GM10248 (cell line): ENCODE measurements at regions of chr12 and their contacts with region 1.

Region 1: DNA sequence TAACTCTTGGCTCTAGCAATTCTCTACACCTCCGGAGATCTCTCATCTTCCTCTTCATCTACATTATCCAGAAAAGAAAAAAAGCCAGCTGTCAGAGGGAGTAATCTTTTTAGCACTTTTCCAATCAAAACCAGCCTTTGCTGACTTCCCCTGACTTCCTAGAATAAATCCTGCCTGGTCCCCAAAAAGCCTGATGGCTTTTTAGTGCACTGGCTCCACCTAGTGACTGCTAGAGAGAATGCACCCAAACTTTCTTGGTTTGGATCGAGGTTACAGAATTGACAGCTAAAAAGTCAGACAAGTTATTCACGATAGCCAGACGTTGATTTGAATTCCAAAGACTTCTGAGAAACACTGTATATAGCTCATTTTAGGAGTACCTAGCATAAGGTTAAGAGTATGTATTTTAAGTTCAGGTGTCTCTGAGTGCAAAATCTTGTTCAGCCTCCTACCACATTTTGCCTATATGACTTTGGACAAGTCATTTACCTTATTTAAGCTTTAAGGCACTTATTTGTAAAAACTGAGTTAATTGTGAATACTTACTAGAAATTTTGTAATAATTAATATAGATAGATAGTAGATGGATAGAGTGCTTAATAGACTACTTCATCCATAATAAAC is 185.7 kb upstream of the GRIN2B start:
- DNase-seq: peak; percentile 65
- CTCF ChIP-seq: peak; percentile 91

Region 2: DNA sequence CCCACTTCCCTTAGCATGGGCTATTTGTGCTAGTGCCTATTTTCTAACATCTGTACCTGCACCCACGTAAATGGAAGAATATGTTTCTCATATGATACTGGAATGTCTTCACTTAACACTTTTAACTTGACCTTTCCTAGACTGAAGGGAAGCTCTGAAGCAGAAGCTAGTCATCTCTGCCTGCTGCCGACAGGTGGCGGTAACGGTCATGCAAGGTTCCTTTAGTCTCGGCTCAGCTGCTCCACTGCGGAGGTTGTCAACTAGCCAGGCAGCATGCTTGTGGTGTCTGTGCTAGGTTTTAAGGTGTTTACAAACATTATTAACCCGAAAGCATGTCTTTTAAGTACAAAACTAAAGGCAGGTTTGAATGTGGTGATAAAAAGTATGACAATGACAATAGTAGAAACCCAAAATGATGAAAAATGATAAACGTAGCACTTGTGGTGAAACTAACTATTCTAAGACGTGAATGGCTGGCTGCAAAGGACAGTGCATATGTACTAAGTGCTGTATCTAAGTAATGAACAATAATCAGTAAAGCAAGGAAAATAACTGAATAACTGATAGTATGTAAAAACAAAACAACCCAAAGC is 302.9 kb before region 1 on chr12:
- CTCF ChIA-PET with region 1: interaction called, 22 read pairs
- POLR2A ChIA-PET with region 1: no interaction called
- DNase-seq: peak; percentile 64
- CTCF ChIP-seq: peak; percentile 94

Region 3: DNA sequence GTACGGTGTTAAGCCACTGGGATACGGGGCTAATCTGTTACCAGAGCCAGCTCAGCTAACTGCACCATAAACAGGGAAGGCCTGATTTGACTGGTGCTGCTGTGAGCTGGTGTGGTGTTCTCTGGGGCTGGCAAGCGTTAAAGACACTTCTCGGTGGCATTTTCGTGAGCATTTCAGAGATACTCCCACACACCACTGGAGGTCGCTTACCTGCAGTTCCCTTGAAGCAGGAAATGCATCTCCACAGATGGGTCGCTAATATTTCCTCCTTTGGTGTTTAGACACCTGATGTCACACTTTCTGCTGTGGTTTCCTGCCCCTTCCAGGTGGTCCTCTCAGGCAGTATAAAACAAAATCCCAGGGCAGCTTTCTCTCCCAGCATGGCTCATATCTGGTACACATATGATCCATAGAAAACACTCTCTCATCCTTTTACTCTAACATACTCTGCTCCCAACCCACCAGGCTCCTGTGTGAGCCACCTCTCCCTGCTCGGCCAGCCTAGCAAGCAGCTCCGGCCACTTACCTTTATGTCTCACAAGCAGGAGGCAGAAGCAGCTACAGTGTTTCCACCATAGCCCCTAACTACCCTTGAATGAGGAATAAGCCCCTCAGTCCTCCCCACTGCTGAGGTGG is 55.8 kb before region 1 on chr12:
- CTCF ChIA-PET with region 1: interaction called, 63 read pairs
- POLR2A ChIA-PET with region 1: no interaction called
- DNase-seq: peak; percentile 64
- CTCF ChIP-seq: peak; percentile 57

Region 4: GRCh38 chr12:14148489-14149270 is 18.4 kb before region 1 on chr12:
- CTCF ChIA-PET with region 1: interaction called, 28 read pairs
- POLR2A ChIA-PET with region 1: no interaction called
- DNase-seq: no peak
- CTCF ChIP-seq: no peak